ENCODE measurements at regions of chr4 and their contacts with region 1.

Region 1: DNA sequence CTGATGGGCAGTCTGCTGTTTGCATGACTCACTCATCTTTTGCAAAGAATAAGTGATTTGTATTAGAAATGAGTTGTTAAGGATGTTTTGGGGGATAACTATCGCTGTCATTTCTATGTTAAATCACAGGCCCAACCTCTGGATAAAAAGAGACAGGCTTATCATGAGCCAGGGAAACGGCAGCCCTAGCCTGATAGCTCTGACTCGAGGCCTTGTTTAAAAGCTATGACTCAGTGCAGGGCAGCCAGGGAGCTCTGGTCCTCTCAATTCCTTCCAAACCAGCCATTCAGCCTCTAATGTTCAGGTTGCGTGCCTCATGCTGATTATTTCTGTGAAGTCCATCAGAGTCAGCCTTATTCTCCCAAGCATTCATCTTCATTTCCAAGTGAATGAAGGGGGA is 305.9 kb upstream of the HAND2 start:
- DNase-seq: peak in 1 of 3 donors; percentile 0
- H3K4me3 ChIP-seq: no peak overlapping the region
- H3K27ac ChIP-seq: no peak overlapping the region
- H3K4me1 ChIP-seq: no peaks in the 10 kb centered on the region
- H3K27me3 ChIP-seq: peaks cover 0 to 11% (median 0%) of the 10 kb centered on the region in 5 experiments

Region 2: DNA sequence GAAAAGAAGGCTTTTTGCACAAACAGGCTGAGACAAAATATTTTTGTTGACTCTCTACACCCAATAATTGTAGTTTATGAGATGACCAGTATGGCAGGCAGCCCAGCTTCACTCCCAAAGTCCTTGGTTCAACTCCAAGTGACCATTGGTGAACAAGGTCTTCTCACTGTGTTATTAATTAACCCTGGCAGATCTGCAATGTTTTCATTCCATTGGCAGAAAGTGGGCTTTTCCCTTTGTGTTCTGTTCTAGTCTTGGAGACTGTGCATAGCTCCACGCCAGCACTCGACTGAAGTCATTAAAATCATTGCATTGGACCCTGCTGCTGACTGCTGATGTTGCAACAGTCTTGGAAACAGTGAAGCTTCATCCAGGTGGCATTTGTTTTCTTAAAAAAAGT is 28.6 kb before region 1 on chr4:
- CTCF ChIA-PET with region 1: no interaction called
- POLR2A ChIA-PET with region 1: no interaction called
- DNase-seq: no peak
- H3K4me3 ChIP-seq: no peak overlapping the region
- H3K27ac ChIP-seq: no peak overlapping the region
- H3K4me1 ChIP-seq: no peaks in the 10 kb centered on the region
- H3K27me3 ChIP-seq: peaks cover 0 to 2% (median 0%) of the 10 kb centered on the region in 5 experiments

Region 3: GRCh38 chr4:173990126-173990868 is 154.4 kb after region 1 on chr4:
- CTCF ChIA-PET with region 1: interaction called, 10 read pairs
- POLR2A ChIA-PET with region 1: no interaction called
- DNase-seq: peak; percentile 34 to 54 (median 46)
- H3K4me3 ChIP-seq: no peak overlapping the region
- H3K27ac ChIP-seq: no peak overlapping the region
- H3K4me1 ChIP-seq: no peaks in the 10 kb centered on the region
- H3K27me3 ChIP-seq: peaks cover 0 to 28% (median 11%) of the 10 kb centered on the region in 5 experiments

Measured in common myeloid progenitor, CD34-positive (primary cell).